ENCODE measurements at regions of chr3 and their contacts with region 1.

Region 1: GRCh38 chr3:17742108-17742879 is at the start of gene TBC1D5:
- DNase-seq: peak; percentile 96
- ATAC-seq: peak; percentile 93
- H3K4me3 ChIP-seq: peak within 1 kb of the TSS; percentile 67 to 70
- H3K27ac ChIP-seq: peak within 1 kb of the TSS; percentile 99
- H3K4me1 ChIP-seq: peaks cover 9 to 19% of the 10 kb centered on the region in 2 experiments; a peak in 2 of 4 replicates
- H3K27me3 ChIP-seq: no peaks in the 10 kb centered on the region
- CTCF ChIP-seq: no peak
- POLR2A ChIP-seq: no peak
- RAD21 ChIP-seq: no peak
- total RNA-seq, gene TBC1D5: 33.9 TPM

Region 2: GRCh38 chr3:17573396-17573795 is 168.9 kb before region 1 on chr3:
- CTCF ChIA-PET with region 1: no interaction called
- POLR2A ChIA-PET with region 1: no interaction called
- RAD21 ChIA-PET with region 1: no interaction called
- intact Hi-C with region 1: no loop called
- DNase-seq: no peak
- ATAC-seq: no peak
- H3K4me3 ChIP-seq: no peak overlapping the region
- H3K27ac ChIP-seq: no peak overlapping the region
- H3K4me1 ChIP-seq: no peaks in the 10 kb centered on the region
- H3K27me3 ChIP-seq: no peaks in the 10 kb centered on the region
- CTCF ChIP-seq: no peak
- POLR2A ChIP-seq: no peak
- RAD21 ChIP-seq: no peak

Region 3: GRCh38 chr3:17639765-17640164 is 102.5 kb before region 1 on chr3:
- CTCF ChIA-PET with region 1: interaction called, 4 read pairs
- POLR2A ChIA-PET with region 1: no interaction called
- RAD21 ChIA-PET with region 1: no interaction called
- intact Hi-C with region 1: loop called (anchors 5 kb)
- DNase-seq: peak; percentile 69
- ATAC-seq: peak; percentile 74
- H3K4me3 ChIP-seq: peak overlapping the region; percentile 2 to 35; a peak in 2 of 4 replicates
- H3K27ac ChIP-seq: peak overlapping the region; percentile 59
- H3K4me1 ChIP-seq: peaks cover 40 to 63% of the 10 kb centered on the region in 2 experiments
- H3K27me3 ChIP-seq: no peaks in the 10 kb centered on the region
- CTCF ChIP-seq: no peak
- POLR2A ChIP-seq: no peak
- RAD21 ChIP-seq: 0 out of 2 replicates have a peak, but pooled peaks have one; percentile 16

Region 4: GRCh38 chr3:17802821-17803392 is 60.6 kb after region 1 on chr3:
- CTCF ChIA-PET with region 1: no interaction called
- POLR2A ChIA-PET with region 1: no interaction called
- RAD21 ChIA-PET with region 1: no interaction called
- intact Hi-C with region 1: no loop called
- DNase-seq: no peak
- ATAC-seq: no peak
- H3K4me3 ChIP-seq: no peak overlapping the region
- H3K27ac ChIP-seq: no peak overlapping the region
- H3K4me1 ChIP-seq: peaks cover 0 to 7% of the 10 kb centered on the region in 2 experiments; a peak in 1 of 4 replicates
- H3K27me3 ChIP-seq: no peaks in the 10 kb centered on the region
- CTCF ChIP-seq: no peak
- POLR2A ChIP-seq: no peak
- RAD21 ChIP-seq: no peak

Measured in HCT116 (cell line).